ENCODE measurements at regions of chr5 and their contacts with region 1.

Region 1: DNA sequence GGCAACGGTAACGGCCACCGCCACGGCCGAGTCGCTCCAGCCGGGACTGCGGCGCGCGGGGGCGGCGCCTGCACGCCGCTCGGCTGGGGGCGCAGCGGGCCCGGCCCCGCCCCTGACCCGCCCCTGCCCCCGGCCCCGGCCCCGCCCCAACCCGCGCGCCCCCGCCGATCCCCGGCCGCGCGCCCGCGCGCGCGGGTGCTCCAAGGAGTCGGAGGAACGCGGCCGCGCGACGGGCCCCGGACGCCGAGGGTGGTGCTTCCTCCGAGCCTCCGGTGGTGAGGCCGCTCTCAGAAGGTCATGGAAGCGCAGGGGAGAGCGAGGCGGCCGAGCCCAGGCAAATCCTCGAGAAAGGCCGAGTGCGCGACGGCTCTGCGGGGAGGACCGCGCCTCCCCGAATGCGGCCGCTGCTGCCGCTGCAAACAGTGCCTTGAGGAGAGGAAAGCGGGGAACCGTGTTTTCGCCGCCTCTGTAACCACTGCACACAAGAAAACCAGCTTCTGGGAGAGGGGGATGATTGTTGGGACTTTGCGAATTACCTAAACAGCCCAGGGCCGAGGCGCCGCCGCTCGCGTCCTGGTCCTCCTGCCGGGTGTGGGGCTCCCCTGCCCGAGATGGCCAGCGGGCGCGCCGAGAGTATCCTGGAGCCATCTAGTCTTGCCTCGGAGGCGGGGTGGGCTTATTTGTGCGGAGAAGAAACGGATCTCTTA is at the start of gene LIFR:
- DNase-seq: peak; percentile 81
- H3K4me3 Mint-ChIP-seq: peak within 1 kb of the TSS; percentile 81
- H3K27ac Mint-ChIP-seq: peak within 1 kb of the TSS; percentile 33
- H3K4me1 Mint-ChIP-seq: no peaks in the 10 kb centered on the region
- H3K27me3 Mint-ChIP-seq: no peaks in the 10 kb centered on the region
- CTCF ChIP-seq: no peak
- total RNA-seq, gene LIFR: 3.7 and 3.9 TPM in 2 replicates

Region 2: DNA sequence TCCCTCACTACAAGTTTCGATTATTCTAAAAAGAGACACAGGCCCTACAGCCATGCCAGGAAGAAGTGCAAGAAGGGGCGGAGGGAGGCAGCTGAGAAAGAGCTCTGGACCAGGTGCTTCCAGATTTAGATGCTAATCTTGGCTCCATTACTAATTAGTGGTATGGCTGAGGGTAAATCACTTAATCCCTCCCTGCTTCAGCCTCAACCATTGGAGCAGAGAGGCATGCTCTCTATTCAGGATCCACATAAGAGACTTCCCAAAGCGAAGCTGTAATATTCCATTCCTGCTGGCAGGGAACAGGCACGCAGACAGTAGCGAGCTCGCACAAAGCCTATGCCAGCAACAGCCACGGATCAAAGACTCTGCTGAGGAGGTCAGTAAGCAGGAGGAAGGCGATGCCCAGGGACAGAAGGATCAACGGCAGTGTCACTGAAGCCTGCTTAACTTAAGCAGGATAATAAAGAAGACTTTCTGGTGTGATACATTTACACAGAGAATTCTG is 24.5 kb before region 1 on chr5:
- CTCF ChIA-PET with region 1: no interaction called
- POLR2A ChIA-PET with region 1: no interaction called
- intact Hi-C with region 1: no loop called
- DNase-seq: no peak
- H3K4me3 Mint-ChIP-seq: no peak overlapping the region
- H3K27ac Mint-ChIP-seq: no peak overlapping the region
- H3K4me1 Mint-ChIP-seq: peaks cover 13% of the 10 kb centered on the region
- H3K27me3 Mint-ChIP-seq: no peaks in the 10 kb centered on the region
- CTCF ChIP-seq: no peak

Region 3: GRCh38 chr5:38598994-38599611 is 42.4 kb after region 1 on chr5:
- CTCF ChIA-PET with region 1: interaction called, 3 read pairs
- POLR2A ChIA-PET with region 1: interaction called, 8 read pairs
- intact Hi-C with region 1: loop called (anchors 2 kb)
- DNase-seq: peak; percentile 80
- H3K4me3 Mint-ChIP-seq: no peak overlapping the region
- H3K27ac Mint-ChIP-seq: no peak overlapping the region
- H3K4me1 Mint-ChIP-seq: peaks cover 50% of the 10 kb centered on the region
- H3K27me3 Mint-ChIP-seq: no peaks in the 10 kb centered on the region
- CTCF ChIP-seq: no peak

Region 4: DNA sequence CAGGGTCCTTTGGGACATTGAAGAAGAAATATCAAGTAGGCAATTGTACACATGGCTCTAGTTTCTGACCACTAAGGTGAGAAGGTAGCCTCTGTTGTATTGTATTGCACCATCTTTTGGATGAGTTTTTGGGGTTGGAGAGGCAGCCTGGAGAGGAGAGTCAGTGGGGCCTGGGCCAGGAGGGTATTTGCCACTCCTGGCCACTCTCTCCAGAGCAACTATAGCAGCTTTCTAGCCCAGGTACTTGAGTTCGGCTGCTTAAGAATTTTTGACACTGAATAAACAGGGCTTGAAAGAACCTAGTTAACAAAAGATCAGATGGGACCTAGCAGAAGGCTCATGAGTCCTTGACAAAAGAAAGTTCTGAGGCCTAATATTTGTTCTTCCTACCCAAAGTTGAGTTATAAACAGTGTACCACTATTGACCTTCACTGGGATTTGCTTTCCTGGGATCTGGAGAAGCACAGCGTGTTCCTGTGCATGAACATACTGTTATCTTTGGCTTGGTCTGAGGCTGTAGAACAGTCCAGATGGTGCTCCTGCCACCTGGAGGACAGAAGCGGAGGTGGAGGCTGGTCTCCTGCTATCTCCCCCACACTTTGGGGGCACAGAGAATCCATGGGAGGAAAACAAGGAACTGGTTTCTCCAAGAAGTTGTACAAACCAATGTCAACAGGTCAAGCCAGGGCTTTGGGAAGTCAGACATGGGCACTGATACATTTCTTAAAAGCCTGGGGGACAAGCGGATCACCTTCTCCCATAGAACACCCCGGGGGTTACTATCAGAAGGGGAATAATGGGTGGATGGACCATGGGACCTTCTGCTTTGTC is 110.1 kb after region 1 on chr5:
- CTCF ChIA-PET with region 1: no interaction called
- POLR2A ChIA-PET with region 1: interaction called, 4 read pairs
- intact Hi-C with region 1: loop called (anchors 1 kb)
- DNase-seq: peak; percentile 64
- H3K4me3 Mint-ChIP-seq: no peak overlapping the region
- H3K27ac Mint-ChIP-seq: peak overlapping the region; percentile 43
- H3K4me1 Mint-ChIP-seq: peaks cover 29% of the 10 kb centered on the region
- H3K27me3 Mint-ChIP-seq: no peaks in the 10 kb centered on the region
- CTCF ChIP-seq: peak; percentile 49

Measured in MCF 10A (cell line).